ENCODE measurements at regions of chr4 and their contacts with region 1.

Region 1: DNA sequence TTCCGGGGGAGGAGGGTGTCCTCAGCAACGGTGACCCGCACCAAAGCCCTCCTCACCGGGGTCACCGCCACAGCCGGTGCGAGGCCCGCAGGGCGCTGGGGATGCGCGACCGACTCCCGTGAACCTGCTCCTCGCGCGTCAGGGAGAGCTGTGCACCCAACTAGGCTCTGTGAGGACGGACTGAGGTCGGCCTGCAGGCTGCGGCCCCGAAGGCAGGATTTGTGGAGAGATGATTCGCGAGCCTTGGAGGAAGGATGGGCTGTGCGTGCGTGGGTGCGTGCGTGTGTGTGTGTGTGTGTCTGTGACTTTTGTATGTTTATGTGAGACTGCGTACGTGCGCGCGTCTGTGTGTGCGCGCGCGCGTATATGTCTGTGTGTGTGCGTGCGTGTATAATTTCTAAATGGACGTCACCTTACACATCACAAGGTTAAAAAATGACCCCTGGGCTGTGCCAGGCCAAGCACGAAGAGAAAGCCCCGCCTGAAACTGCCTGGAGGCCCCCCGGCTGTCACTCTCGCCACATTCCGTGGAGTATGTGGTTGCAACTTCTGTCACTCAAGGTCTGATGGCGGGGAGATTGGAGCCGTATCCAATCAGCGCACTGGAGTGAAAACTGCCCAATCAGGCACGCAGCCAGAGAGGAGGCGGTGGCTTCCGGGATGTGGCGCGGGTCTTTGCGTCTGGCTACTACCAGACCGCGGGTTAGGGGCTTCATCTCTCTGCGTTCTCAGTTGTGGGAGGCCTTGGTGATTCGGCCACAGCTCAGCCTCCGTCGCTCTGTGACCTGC is at the start of gene ZNF141:
- DNase-seq: peak; percentile 78
- ATAC-seq: peak; percentile 92
- H3K4me3 Mint-ChIP-seq: peak within 1 kb of the TSS; percentile 100
- H3K27ac Mint-ChIP-seq: peak within 1 kb of the TSS; percentile 99
- H3K4me1 Mint-ChIP-seq: peaks cover 38% of the 10 kb centered on the region
- H3K27me3 Mint-ChIP-seq: no peaks in the 10 kb centered on the region
- CTCF ChIP-seq: no peak
- total RNA-seq, gene ZNF141: 36.9 and 47.8 TPM in 2 replicates

Region 2: DNA sequence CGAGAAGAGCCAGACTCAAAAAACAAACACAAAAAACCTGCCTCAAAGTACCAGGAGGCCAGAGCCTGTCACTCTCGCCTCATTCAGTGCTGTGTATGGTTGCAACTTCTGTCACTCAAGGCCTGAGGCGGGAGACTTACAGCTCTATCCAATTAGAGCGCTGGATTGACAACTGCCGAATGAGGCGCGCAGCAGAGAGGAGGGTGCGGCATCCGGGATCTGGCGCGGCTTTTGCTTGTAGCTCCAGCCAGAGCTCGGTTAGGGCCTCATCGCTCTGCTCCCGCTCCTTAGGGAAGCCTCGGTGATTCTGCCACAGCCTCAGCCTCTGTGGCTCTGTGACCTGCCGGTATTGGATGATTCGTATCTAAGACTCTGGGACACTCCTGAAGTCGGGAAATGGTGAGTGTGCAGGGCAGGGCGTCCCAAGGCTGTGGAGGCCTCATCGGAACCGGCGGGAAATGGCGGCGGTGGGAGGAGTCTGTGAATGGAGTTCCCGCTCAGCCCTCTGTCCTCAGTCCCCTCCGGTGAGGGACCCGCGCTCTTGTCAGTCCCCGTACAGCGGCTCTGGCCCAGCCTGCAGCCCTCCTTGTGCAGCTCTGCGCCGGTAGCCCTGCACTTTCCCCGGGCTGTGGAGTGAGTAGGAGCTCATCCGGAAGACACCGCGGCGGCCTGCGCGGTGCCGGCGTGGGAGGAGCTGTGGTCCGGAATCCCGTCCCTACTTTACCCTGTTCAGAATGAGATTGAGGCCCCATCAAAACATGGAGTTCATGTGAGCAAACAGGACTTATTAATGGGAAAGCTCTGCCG is 212.9 kb before region 1 on chr4 and contains the start of gene ZNF718:
- CTCF ChIA-PET with region 1: no interaction called
- POLR2A ChIA-PET with region 1: interaction called, 12 read pairs
- intact Hi-C with region 1: loop called (anchors 5 kb)
- DNase-seq: peak; percentile 80
- ATAC-seq: peak; percentile 97
- H3K4me3 Mint-ChIP-seq: peak within 1 kb of the TSS; percentile 100
- H3K27ac Mint-ChIP-seq: peak within 1 kb of the TSS; percentile 99
- H3K4me1 Mint-ChIP-seq: peaks cover 32% of the 10 kb centered on the region
- H3K27me3 Mint-ChIP-seq: no peaks in the 10 kb centered on the region
- CTCF ChIP-seq: no peak
- total RNA-seq, gene ZNF718: 9.3 and 10.9 TPM in 2 replicates

Region 3: DNA sequence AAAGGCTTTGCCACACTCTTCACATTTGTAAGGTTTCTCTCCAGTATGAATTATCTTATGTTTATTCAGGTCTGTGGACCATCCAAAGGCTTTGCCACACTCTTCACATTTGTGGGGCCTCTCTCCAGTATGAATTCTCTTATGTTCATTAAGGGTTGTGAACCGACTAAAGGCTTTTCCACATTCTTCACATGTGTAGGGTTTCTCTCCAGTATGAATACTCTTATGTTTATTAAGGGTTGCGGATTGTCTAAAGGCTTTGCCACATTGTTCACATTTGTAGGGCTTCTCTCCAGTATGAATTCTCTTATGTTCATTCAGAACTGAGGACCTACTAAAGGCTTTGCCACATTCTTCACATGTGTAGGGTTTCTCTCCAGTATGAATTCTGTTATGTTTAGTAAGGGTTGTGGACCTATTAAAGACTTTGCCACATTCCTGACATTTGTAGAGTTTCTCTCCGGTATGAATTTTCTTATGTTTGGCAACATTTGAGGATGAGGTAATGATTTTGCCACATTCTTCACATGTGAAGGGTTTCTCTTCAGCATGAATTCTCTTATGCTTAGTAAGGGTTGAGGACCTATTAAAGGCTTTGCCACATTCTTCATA is 65.7 kb before region 1 on chr4:
- CTCF ChIA-PET with region 1: no interaction called
- POLR2A ChIA-PET with region 1: no interaction called
- intact Hi-C with region 1: no loop called
- DNase-seq: no peak
- ATAC-seq: no peak
- H3K4me3 Mint-ChIP-seq: no peak overlapping the region
- H3K27ac Mint-ChIP-seq: no peak overlapping the region
- H3K4me1 Mint-ChIP-seq: no peaks in the 10 kb centered on the region
- H3K27me3 Mint-ChIP-seq: no peaks in the 10 kb centered on the region
- CTCF ChIP-seq: no peak

Region 4: GRCh38 chr4:306551-306961 is 30.8 kb before region 1 on chr4:
- CTCF ChIA-PET with region 1: no interaction called
- POLR2A ChIA-PET with region 1: no interaction called
- intact Hi-C with region 1: loop called (anchors 1 kb)
- DNase-seq: no peak
- ATAC-seq: peak; percentile 80
- H3K4me3 Mint-ChIP-seq: no peak overlapping the region
- H3K27ac Mint-ChIP-seq: peak overlapping the region; percentile 65
- H3K4me1 Mint-ChIP-seq: peaks cover 23% of the 10 kb centered on the region
- H3K27me3 Mint-ChIP-seq: peaks cover 5% of the 10 kb centered on the region
- CTCF ChIP-seq: no peak

Region 5: GRCh38 chr4:445410-445809 is 108.1 kb after region 1 on chr4:
- CTCF ChIA-PET with region 1: no interaction called
- POLR2A ChIA-PET with region 1: no interaction called
- intact Hi-C with region 1: no loop called
- DNase-seq: no peak
- ATAC-seq: no peak
- H3K4me3 Mint-ChIP-seq: no peak overlapping the region
- H3K27ac Mint-ChIP-seq: no peak overlapping the region
- H3K4me1 Mint-ChIP-seq: no peaks in the 10 kb centered on the region
- H3K27me3 Mint-ChIP-seq: no peaks in the 10 kb centered on the region
- CTCF ChIP-seq: no peak

Region 6: GRCh38 chr4:498328-498904 is 161.1 kb after region 1 on chr4:
- CTCF ChIA-PET with region 1: no interaction called
- POLR2A ChIA-PET with region 1: no interaction called
- intact Hi-C with region 1: loop called (anchors 1 kb)
- DNase-seq: no peak
- ATAC-seq: peak; percentile 25
- H3K4me3 Mint-ChIP-seq: peak overlapping the region; percentile 93
- H3K27ac Mint-ChIP-seq: peak overlapping the region; percentile 95
- H3K4me1 Mint-ChIP-seq: peaks cover 32% of the 10 kb centered on the region
- H3K27me3 Mint-ChIP-seq: no peaks in the 10 kb centered on the region
- CTCF ChIP-seq: no peak

Region 7: GRCh38 chr4:1683736-1684505 is 1346.6 kb after region 1 on chr4 and contains the start of gene FAM53A:
- CTCF ChIA-PET with region 1: no interaction called
- POLR2A ChIA-PET with region 1: no interaction called
- intact Hi-C with region 1: loop called (anchors 10 kb)
- DNase-seq: peak; percentile 99
- ATAC-seq: peak; percentile 95
- H3K4me3 Mint-ChIP-seq: peak within 1 kb of the TSS; percentile 86
- H3K27ac Mint-ChIP-seq: peak within 1 kb of the TSS; percentile 69
- H3K4me1 Mint-ChIP-seq: peaks cover 10% of the 10 kb centered on the region
- H3K27me3 Mint-ChIP-seq: no peaks in the 10 kb centered on the region
- CTCF ChIP-seq: no peak
- total RNA-seq, gene FAM53A: 0.81 and 1.2 TPM in 2 replicates